Sciatic nerve (tissue), 2 donors: ENCODE measurements at regions of chr11 and their contacts with region 1.

Region 1: GRCh38 chr11:77053217-77054015 is 13.4 kb upstream of the CAPN5 start:
- DNase-seq: no peak
- ATAC-seq: no peak

Region 2: GRCh38 chr11:77088236-77089003 is 35.0 kb after region 1 on chr11:
- intact Hi-C with region 1: loop called (anchors 1 kb)
- DNase-seq: peak; percentile 50
- ATAC-seq: no peak

Region 3: DNA sequence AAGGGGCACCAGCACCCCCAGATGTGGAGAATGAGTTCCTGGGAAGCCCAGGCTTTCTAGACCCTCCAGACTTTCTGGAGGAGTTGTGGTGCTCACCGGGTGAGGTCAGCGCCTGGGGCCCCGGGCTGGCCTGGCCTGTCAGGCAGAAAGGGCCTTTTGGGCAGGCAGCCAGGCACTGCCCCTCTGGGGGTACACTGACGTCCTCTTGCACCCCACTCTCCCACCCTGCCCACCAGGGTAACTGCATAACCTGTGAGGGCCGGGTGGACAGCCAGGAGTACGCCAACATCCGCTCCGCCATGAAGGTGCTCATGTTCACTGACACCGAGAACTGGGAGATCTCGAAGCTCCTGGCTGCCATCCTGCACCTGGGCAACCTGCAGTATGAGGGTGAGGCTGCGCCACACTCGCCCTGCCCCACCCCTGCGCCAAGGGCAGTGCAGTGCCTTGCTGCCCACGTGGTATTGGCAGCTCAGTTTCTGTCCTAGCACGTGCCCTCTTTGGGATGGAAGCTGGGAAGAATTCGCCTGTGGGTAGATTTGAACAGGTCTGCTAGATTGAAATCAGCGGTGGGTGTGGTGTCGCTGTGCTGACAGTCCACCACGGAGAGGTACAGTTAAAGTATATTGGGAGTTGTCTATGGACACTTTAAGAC is 104.8 kb after region 1 on chr11:
- intact Hi-C with region 1: no loop called
- DNase-seq: no peak
- ATAC-seq: no peak